Right cardiac atrium (tissue), 5 donors: ENCODE measurements at regions of chr15 and their contacts with region 1.

Region 1: GRCh38 chr15:97995881-97996603 is 35.5 kb downstream of the ARRDC4 start:
- DNase-seq: no peak
- ATAC-seq: no peak
- H3K4me3 ChIP-seq: no peak overlapping the region
- H3K27ac ChIP-seq: no peak overlapping the region
- H3K4me1 ChIP-seq: peaks cover 2% of the 10 kb centered on the region
- H3K27me3 ChIP-seq: no peaks in the 10 kb centered on the region

Region 2: DNA sequence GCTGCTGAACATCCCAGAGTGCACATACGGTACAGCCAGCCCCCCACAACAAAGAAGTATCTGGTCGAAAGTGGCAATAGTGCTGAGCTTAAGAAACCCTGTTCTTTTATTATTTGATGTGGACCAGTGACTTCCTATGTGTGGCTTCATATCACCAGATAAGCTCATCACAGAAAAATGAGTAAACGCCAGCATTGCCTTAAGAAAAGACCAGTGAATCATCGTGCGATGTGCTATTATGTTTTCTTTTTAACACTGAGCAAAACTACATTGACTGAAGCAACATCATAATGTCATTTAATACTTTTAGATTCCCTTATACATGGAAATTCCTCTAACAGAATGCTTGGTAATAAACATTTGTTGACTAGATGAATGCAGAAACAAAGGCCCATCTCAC is 80.8 kb before region 1 on chr15:
- intact Hi-C with region 1: loop called in 1 of 4 experiments (anchors 10 kb)
- DNase-seq: no peak
- ATAC-seq: no peak
- H3K4me3 ChIP-seq: no peak overlapping the region
- H3K27ac ChIP-seq: no peak overlapping the region
- H3K4me1 ChIP-seq: no peaks in the 10 kb centered on the region
- H3K27me3 ChIP-seq: no peaks in the 10 kb centered on the region

Region 3: DNA sequence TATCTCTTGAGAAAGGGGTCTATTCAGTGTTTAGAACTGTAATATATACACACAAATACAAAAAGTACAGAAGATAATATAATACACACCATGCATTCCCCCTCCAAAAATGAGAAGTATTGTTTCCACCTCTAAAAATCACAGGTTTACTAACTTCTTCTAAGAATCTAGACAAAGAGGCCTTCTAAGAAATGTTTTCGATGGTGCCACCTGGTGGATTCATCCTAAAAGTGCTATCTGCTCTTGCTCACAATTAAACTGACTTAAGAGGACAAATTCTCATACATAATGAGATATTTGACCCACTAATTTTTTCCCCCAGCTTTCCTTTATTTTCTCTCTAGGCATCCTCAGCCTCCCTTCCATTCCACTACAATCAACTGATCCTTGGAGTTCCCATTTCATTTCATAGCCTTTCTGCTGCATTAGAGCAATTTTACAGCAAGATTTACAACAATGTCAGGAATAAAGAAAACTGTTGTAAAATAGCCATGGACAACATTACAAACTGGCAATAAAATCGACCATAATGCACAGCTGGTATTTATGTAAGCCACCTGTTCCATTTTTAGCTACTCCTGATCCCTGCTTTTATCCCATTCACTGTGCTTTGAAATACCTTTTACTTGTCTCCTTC is 89.1 kb after region 1 on chr15:
- intact Hi-C with region 1: loop called in 1 of 4 experiments (anchors 5 kb)
- DNase-seq: no peak
- ATAC-seq: no peak
- H3K4me3 ChIP-seq: no peak overlapping the region
- H3K27ac ChIP-seq: no peak overlapping the region
- H3K4me1 ChIP-seq: no peaks in the 10 kb centered on the region
- H3K27me3 ChIP-seq: no peaks in the 10 kb centered on the region

Region 4: DNA sequence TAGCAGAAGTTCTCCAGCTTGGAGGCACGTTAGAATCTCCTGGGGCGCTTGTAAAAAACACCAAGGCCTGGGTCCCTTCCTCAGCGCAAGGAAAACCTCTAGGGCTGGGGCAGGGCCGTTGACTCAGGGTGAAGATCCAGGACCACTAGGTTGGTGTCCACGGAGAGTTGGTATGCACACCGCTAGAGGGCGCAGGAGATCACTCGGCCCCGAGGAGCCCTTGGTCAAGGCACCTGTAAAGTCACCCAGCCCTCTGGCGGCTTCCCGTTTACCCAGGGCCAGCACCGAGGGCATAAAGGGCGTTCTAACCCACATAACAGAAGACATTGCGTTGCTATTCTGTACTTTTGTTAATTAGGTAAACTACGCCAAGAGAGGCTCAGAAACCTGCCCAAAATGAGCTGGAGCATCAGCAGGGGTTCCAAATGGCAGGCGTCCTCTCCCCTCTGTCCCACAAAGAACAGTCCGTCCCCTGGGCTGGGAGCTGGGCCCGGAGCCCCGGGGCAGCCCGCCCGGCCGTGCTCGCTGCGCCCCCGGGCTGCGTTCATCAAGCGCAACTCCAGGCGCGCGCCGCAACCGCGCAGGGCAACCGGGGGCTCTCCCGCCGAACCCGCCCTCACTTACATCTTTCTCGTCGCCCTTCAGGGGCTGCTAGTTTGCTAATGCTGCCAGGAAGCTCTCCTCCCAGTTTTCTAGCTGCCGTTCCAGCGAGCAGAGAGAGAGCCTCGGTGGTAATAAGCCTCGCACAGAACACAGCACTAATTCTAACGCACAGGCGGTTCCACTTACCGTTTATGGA is 296.6 kb after region 1 on chr15:
- intact Hi-C with region 1: loop called in 1 of 4 experiments (anchors 10 kb)
- DNase-seq: peak in 2 of 3 donors; percentile 37 to 58
- ATAC-seq: peak in 1 of 2 donors; percentile 47
- H3K4me3 ChIP-seq: no peak overlapping the region
- H3K27ac ChIP-seq: no peak overlapping the region
- H3K4me1 ChIP-seq: no peaks in the 10 kb centered on the region
- H3K27me3 ChIP-seq: no peaks in the 10 kb centered on the region